ENCODE measurements at regions of chr15 and their contacts with region 1.

Region 1: GRCh38 chr15:50908210-50909009 is at the start of gene AP4E1:
- DNase-seq: peak; percentile 96
- H3K4me3 Mint-ChIP-seq: peak within 1 kb of the TSS; percentile 93
- H3K27ac Mint-ChIP-seq: peak within 1 kb of the TSS; percentile 98
- H3K4me1 Mint-ChIP-seq: peaks cover 22% of the 10 kb centered on the region
- H3K27me3 Mint-ChIP-seq: no peaks in the 10 kb centered on the region
- total RNA-seq, gene AP4E1: 12.0 to 12.7 TPM

Region 2: DNA sequence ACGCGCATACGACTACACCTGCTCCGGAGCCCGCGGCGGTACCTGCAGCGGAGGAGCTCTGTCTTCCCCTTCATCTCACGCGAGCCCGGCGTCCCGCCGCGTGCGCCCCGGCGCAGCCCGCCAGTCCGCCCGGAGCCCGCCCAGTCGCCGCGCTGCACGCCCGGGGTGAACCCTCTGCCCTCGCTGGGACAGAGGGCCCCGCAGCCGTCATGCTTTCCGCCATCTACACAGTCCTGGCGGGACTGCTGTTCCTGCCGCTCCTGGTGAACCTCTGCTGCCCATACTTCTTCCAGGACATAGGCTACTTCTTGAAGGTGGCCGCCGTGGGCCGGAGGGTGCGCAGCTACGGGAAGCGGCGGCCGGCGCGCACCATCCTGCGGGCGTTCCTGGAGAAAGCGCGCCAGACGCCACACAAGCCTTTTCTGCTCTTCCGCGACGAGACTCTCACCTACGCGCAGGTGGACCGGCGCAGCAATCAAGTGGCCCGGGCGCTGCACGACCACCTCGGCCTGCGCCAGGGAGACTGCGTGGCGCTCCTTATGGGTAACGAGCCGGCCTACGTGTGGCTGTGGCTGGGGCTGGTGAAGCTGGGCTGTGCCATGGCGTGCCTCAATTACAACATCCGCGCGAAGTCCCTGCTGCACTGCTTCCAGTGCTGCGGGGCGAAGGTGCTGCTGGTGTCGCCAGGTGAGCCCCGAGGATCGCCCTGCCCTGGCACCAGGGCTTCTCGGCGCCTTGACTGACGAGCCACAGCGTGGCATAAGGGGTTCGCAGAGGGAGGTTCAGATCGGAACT is 726.0 kb before region 1 on chr15:
- CTCF ChIA-PET with region 1: no interaction called
- POLR2A ChIA-PET with region 1: no interaction called
- intact Hi-C with region 1: loop called (anchors 1 kb)
- DNase-seq: peak; percentile 68
- H3K4me3 Mint-ChIP-seq: peak overlapping the region; percentile 98
- H3K27ac Mint-ChIP-seq: peak overlapping the region; percentile 78
- H3K4me1 Mint-ChIP-seq: peaks cover 34% of the 10 kb centered on the region
- H3K27me3 Mint-ChIP-seq: peaks cover 17% of the 10 kb centered on the region

Region 3: GRCh38 chr15:50424066-50424890 is 484.1 kb before region 1 on chr15 and contains the start of gene USP8:
- CTCF ChIA-PET with region 1: no interaction called
- POLR2A ChIA-PET with region 1: no interaction called
- intact Hi-C with region 1: loop called (anchors 1 kb)
- DNase-seq: peak; percentile 96
- H3K4me3 Mint-ChIP-seq: peak within 1 kb of the TSS; percentile 94
- H3K27ac Mint-ChIP-seq: peak within 1 kb of the TSS; percentile 82
- H3K4me1 Mint-ChIP-seq: peaks cover 29% of the 10 kb centered on the region
- H3K27me3 Mint-ChIP-seq: no peaks in the 10 kb centered on the region
- total RNA-seq, gene USP8: 43.4 to 46.0 TPM

Region 4: DNA sequence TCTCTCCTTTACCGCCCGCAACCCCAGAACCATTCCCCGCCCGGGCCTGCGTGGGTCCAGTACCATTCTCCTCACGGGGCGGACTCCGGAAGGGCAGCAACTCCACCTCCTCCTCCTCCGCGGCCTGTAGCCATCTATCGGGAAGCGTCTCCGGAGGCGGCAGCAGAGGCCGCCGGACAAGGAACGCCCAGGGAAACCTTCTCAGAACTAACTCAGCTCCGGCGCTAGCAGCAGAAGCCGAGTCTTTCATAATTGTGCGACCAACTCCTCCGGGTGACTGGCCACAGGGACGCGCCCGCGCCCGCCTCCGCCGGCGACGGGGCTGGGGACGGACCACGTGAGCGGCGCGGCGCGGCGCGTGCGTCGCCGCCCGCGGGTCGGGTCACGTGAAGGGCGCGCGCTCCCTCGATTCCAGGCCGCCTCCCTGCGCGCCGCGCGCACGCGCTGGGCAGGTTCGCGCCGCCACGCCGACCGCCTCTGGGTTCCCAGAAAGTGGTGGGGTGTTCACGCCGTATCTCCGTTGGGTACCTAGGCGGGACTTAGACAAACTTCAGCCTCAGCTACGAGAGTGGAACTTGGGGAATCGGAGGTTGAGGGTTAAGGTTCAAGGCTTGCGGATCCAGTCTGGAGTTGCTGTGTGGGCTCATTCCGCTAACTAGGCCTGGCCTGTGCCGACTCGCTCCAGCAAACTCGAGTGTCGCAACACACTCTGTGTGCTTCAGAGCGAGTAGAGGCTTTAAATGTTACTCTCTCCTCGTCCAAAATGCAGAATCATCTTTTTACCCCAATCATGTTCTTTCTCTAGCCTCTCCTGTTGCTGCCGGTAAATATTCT is 221.7 kb before region 1 on chr15 and contains the start of gene TRPM7:
- CTCF ChIA-PET with region 1: no interaction called
- POLR2A ChIA-PET with region 1: interaction called, 6 read pairs
- intact Hi-C with region 1: loop called (anchors 1 kb)
- DNase-seq: peak; percentile 93
- H3K4me3 Mint-ChIP-seq: peak within 1 kb of the TSS; percentile 99
- H3K27ac Mint-ChIP-seq: peak within 1 kb of the TSS; percentile 100
- H3K4me1 Mint-ChIP-seq: peaks cover 51% of the 10 kb centered on the region
- H3K27me3 Mint-ChIP-seq: no peaks in the 10 kb centered on the region
- total RNA-seq, gene TRPM7: 37.4 to 44.8 TPM

Region 5: DNA sequence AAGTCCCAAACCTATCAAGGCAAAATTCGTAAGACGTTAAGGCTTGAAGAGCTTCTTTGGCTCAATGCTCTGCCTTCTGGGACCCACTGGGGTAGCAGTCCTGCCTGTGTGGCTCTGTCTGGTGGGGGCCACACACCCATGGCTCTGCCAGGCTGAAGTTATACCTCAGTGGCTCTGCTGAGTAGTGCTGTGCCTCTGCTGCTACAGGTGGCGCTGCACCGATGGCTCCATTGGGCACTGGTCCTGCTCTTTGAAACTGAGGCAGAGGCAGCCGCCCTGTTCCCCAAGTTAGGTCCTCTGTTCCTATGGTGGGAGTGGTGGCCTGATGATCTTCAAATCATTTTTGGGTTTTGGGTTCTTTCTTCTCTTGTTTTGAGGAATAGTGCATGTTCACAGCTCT is 67.9 kb before region 1 on chr15:
- CTCF ChIA-PET with region 1: no interaction called
- POLR2A ChIA-PET with region 1: no interaction called
- intact Hi-C with region 1: no loop called
- DNase-seq: no peak
- H3K4me3 Mint-ChIP-seq: no peak overlapping the region
- H3K27ac Mint-ChIP-seq: no peak overlapping the region
- H3K4me1 Mint-ChIP-seq: no peaks in the 10 kb centered on the region
- H3K27me3 Mint-ChIP-seq: peaks cover 2% of the 10 kb centered on the region

Region 6: GRCh38 chr15:50883903-50884302 is 24.5 kb before region 1 on chr15:
- CTCF ChIA-PET with region 1: interaction called, 14 read pairs
- POLR2A ChIA-PET with region 1: interaction called, 14 read pairs
- intact Hi-C with region 1: loop called (anchors 1 kb)
- DNase-seq: peak; percentile 34
- H3K4me3 Mint-ChIP-seq: no peak overlapping the region
- H3K27ac Mint-ChIP-seq: peak overlapping the region; percentile 56
- H3K4me1 Mint-ChIP-seq: peaks cover 65% of the 10 kb centered on the region
- H3K27me3 Mint-ChIP-seq: no peaks in the 10 kb centered on the region